Ovary (tissue), 10 donors: ENCODE measurements at regions of chr16 and their contacts with region 1.

Region 1: DNA sequence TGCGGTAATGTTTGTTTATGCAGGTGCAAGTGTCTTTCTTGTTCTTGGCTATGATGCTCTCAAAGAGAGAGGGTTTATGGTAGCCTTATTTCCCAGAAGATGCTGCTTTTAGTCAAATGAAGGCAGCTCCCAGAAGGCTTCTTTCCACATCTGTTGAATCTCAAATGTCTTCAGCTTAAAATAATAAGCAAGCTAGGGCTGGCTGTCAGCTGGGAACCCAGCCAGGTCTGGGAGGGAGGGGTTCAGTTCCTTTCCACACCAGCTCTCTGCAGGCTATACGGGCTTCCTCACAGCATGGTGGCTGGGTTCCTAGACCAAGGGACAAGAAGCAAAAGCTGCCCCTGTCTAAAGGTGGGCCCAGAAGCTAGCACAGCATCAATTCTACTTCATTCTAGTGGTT is 47.4 kb upstream of the ATF7IP2 start:
- DNase-seq: no peak
- H3K4me3 ChIP-seq: no peak overlapping the region
- H3K27ac ChIP-seq: no peak overlapping the region
- H3K4me1 ChIP-seq: no peaks in the 10 kb centered on the region
- H3K27me3 ChIP-seq: no peaks in the 10 kb centered on the region
- CTCF ChIP-seq: no peak
- EP300 ChIP-seq: no peak
- POLR2A ChIP-seq: no peak

Region 2: GRCh38 chr16:10297341-10298006 is 41.0 kb before region 1 on chr16:
- intact Hi-C with region 1: no loop called
- DNase-seq: no peak
- H3K4me3 ChIP-seq: no peak overlapping the region
- H3K27ac ChIP-seq: no peak overlapping the region
- H3K4me1 ChIP-seq: no peaks in the 10 kb centered on the region
- H3K27me3 ChIP-seq: no peaks in the 10 kb centered on the region
- CTCF ChIP-seq: no peak
- EP300 ChIP-seq: no peak
- POLR2A ChIP-seq: no peak

Region 3: GRCh38 chr16:10799736-10800135 is 461.3 kb after region 1 on chr16:
- intact Hi-C with region 1: loop called in 1 of 4 experiments (anchors 5 kb)
- DNase-seq: no peak
- H3K4me3 ChIP-seq: no peak overlapping the region
- H3K27ac ChIP-seq: no peak overlapping the region
- H3K4me1 ChIP-seq: no peaks in the 10 kb centered on the region
- H3K27me3 ChIP-seq: no peaks in the 10 kb centered on the region
- CTCF ChIP-seq: no peak
- EP300 ChIP-seq: no peak
- POLR2A ChIP-seq: no peak

Region 4: GRCh38 chr16:11557801-11558200 is 1219.4 kb after region 1 on chr16:
- intact Hi-C with region 1: no loop called
- DNase-seq: no peak
- H3K4me3 ChIP-seq: no peak overlapping the region
- H3K27ac ChIP-seq: no peak overlapping the region
- H3K4me1 ChIP-seq: peaks cover 8% of the 10 kb centered on the region
- H3K27me3 ChIP-seq: no peaks in the 10 kb centered on the region
- CTCF ChIP-seq: no peak
- EP300 ChIP-seq: no peak
- POLR2A ChIP-seq: no peak

Region 5: DNA sequence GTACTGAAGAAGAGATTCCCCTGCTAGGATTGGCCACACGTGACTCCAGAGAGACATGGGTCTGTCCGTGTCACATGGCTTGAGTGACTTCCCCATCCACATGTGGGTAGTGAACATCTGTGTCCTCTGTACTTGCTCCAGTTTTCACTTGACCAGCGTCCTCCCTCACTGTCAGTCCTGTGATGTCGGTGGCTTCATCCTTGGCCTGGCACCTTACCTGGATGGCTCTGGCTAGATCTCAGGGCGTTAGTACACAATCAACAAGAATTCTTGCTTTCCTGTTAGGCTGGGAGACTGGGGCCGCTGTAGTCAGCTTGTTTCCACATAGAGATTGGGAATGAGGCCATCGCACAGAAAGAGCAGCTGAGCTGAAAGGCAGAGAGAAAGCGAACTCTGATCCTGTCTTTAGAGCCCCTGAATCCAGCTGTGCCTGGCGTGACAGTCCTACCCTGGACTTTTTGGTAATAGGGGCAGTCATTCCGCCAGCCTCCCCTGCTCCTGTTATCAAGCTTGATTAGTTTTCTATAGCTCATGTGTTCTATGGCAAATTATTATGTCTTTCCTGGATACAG is 1865.4 kb after region 1 on chr16:
- intact Hi-C with region 1: no loop called
- DNase-seq: no peak
- H3K4me3 ChIP-seq: no peak overlapping the region
- H3K27ac ChIP-seq: no peak overlapping the region
- H3K4me1 ChIP-seq: peaks cover 5% of the 10 kb centered on the region
- H3K27me3 ChIP-seq: no peaks in the 10 kb centered on the region
- CTCF ChIP-seq: no peak
- EP300 ChIP-seq: no peak
- POLR2A ChIP-seq: no peak